Panc1 (cell line): ENCODE measurements at regions of chr10 and their contacts with region 1.

Region 1: GRCh38 chr10:66189271-66189670 is 736.6 kb upstream of the LRRTM3 start:
- DNase-seq: no peak
- ATAC-seq: no peak
- H3K4me3 ChIP-seq: no peak overlapping the region
- H3K27ac ChIP-seq: no peak overlapping the region
- H3K4me1 ChIP-seq: no peaks in the 10 kb centered on the region
- H3K27me3 ChIP-seq: no peaks in the 10 kb centered on the region
- CTCF ChIP-seq: no peak

Region 2: DNA sequence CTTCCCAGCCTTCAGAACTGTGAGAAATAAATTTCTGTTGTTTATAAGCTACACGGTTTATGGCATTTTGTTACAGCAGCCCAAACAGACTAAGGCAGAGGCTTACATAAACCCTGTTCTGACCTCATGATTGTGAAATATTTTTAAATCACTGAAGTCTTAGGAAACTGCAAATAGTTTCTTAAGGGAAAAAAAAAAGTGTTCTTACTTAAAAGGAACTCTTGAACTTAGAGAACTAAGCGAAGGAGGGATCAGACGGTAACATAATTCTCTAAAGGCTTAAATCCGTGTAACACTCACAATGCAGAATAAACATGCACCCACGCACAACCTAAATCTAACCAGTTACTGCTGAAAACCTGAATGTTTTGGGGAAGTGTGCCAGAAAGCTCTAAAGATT is 12.5 kb before region 1 on chr10:
- CTCF ChIA-PET with region 1: no interaction called
- POLR2A ChIA-PET with region 1: no interaction called
- in situ Hi-C with region 1: no loop called
- intact Hi-C with region 1: loop called (anchors 1 kb)
- DNase-seq: no peak
- ATAC-seq: no peak
- H3K4me3 ChIP-seq: no peak overlapping the region
- H3K27ac ChIP-seq: no peak overlapping the region
- H3K4me1 ChIP-seq: no peaks in the 10 kb centered on the region
- H3K27me3 ChIP-seq: no peaks in the 10 kb centered on the region
- CTCF ChIP-seq: no peak